ENCODE measurements at regions of chr6 and their contacts with region 1.

Region 1: DNA sequence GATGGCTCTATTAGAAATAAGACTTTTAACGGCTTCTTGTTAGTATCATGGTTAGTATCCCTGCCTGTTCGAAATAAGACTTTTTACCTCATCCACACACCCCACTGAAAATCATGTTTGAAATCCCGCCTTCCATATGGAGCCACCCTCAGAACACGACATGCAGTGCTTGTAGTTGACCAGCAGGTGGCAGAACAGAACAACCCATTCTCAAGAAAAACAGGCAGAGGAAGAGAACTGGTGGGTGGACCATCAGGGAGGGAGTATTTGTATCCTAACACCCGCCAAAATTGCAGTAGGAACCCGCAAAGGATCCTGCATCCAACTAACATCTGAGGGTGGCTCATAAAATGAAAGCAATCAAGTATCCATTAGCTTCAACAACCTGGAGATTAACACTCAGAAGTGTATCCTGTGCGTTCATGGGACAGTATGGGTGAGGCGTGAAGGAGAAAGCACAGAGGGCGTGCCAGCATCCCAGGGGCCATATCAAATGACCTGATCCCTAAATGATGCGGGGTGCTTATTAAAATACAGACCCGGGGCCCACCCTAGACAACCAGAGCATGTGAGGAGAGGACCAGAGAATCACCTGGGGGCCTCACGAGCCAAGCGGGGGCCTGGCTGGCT is 89.6 kb upstream of the NHSL1 start:
- DNase-seq: peak in 1 of 2 donors; percentile 73
- ATAC-seq: peak in 7 of 8 donors; percentile 39 to 68 (median 52)
- H3K4me3 ChIP-seq: no peak overlapping the region
- H3K27ac ChIP-seq: no peak overlapping the region
- H3K4me1 ChIP-seq: peaks cover 0 to 31% (median 8%) of the 10 kb centered on the region in 9 donors
- H3K27me3 ChIP-seq: no peaks in the 10 kb centered on the region
- CTCF ChIP-seq: peak; percentile 75 to 97 (median 92)

Region 2: DNA sequence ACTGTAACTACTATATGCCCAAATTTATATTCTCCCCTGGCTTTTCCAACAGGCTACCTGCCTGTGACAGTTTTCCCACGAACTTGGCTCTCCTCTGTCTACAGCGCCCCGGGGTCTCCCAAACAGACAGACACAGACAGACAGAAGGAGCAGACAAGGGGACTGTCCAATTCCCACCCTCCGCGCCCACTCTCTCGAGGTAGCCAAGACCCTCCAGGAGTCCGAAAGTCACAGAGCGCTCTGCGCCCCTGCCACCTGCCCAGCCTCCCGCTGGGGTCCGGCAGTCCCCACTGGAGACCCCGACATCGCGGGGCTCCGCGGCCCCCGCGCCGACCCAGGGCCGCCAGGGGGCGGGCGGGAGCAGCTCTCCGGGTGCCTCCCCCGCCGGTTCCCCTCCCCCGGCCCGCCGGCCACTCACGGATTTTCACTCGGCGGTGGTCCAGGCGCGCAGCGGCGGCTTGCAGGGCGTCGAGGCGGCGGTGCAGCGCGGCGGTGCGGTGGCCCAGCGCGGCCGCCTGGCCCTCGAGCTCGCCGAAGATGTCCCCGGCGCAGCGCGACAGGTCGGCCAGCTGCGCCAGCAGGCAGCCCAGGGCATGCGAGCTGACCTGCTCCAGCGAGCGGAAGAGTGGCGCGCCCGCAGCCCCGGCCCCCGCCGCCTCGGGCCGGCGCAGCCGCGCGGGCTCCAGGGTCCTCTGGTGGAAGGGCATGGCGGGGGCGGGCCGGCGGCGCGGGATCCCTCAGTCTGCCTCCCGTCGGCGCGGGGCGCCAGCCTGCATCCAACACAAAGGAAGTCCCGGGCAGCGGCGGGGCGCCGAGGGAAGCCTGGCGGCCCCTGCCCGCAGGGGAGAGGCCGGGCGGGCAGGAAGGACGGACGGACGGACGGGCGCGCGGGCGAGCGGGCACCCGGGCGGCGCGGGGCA is 103.4 kb after region 1 on chr6:
- intact Hi-C with region 1: loop called in 5 of 10 experiments (anchors 2 to 5 kb)
- DNase-seq: peak; percentile 73 to 84
- ATAC-seq: peak; percentile 78 to 86 (median 84)
- H3K4me3 ChIP-seq: peak overlapping the region; percentile 48 to 88 (median 72)
- H3K27ac ChIP-seq: peak overlapping the region; percentile 46 to 82 (median 75)
- H3K4me1 ChIP-seq: peaks cover 0 to 14% (median 9%) of the 10 kb centered on the region in 9 donors
- H3K27me3 ChIP-seq: peaks cover 0 to 7% (median 0%) of the 10 kb centered on the region in 7 donors
- CTCF ChIP-seq: peak; percentile 80 to 96 (median 92)

Region 3: DNA sequence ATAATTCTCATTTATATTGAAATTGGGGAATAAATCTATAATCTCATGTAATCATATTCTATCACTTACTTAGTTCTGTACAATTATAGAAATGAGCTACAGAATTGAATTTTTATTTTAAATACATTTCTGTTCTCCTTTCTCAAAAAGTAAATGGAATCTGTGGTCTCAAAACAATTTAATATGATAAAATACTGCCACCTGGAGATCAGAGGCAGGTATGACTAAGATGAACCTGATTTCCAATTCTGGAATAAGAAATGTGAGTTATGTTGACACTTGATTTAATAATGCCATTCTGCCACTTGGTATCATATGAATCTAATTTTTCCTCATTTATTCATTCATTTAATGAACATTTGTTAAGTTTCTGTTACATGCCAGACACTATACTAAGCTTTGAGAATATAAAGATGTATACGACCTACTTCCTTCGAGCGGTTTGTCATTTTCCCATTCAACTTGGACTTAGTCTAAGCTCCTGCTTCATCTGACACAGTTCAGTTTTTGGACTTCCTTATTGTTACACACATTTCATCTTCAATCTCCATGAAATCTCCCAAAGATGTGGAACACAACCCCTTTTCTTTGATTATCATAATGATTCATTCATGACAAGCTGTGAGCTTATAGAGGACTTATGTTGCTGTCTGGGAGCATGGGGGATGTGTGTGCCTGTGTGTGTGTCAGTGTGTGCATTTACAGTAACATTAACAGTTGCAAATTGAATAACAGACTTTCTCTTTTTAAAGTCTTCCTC is 177.2 kb after region 1 on chr6:
- intact Hi-C with region 1: loop called (anchors 1 to 5 kb)
- DNase-seq: no peak
- ATAC-seq: no peak
- H3K4me3 ChIP-seq: no peak overlapping the region
- H3K27ac ChIP-seq: no peak overlapping the region
- H3K4me1 ChIP-seq: no peaks in the 10 kb centered on the region
- H3K27me3 ChIP-seq: no peaks in the 10 kb centered on the region
- CTCF ChIP-seq: peak; percentile 34 to 86 (median 70)

Region 4: DNA sequence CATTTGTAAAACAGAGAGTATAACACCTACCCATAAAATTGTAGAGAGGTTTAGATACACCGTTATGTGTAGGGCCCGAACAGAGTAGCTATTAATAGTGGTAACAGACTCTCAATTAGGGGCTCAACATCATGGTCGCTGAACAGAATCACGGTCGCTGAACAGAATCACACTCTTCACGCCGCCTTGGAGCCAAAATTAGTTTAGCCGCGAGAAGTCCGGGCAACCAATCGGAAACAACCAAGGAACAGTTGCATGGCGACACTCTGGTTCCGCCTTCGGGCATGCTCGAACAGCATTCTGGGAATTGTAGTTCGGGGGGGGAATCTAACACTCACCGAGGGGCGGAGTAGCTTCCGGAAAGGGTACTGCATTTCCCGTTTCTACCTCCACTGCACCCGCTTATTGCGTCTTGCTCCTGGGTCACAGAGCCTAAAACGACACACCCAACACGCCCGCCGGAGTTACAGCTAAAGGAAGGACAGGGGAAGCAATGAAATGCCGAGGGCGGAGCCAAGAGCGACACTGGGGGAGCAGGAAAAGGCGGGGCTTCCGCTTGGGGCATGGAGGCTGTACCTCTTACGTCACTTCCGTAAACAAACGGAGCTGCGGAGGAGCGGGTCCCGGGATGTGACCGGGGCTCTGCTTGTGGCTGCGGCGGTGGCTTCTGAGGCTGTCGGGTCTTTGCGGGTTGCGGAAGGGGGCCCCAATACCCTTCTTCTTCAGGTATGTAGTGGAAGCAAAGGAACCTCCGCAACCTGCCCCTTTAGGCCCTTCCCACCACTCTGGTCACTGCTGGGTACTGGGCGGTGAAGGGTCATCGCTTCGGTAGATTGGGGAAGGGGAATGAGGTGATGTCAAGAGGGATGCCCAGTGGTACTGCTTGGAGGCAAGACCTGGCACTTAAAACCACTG is 184.5 kb after region 1 on chr6 and contains the start of gene CCDC28A:
- intact Hi-C with region 1: loop called in 5 of 10 experiments (anchors 2 to 5 kb)
- DNase-seq: peak; percentile 91 to 96
- ATAC-seq: peak; percentile 97 to 99 (median 98)
- H3K4me3 ChIP-seq: peak within 1 kb of the TSS; percentile 69 to 96 (median 84)
- H3K27ac ChIP-seq: peak within 1 kb of the TSS; percentile 90 to 99 (median 96)
- H3K4me1 ChIP-seq: peaks cover 2 to 30% (median 22%) of the 10 kb centered on the region in 9 donors
- H3K27me3 ChIP-seq: no peaks in the 10 kb centered on the region
- CTCF ChIP-seq: peak in 1 of 9 donors; percentile 9
- total RNA-seq, gene CCDC28A: 4.9 to 15.6 (median 9.5) TPM

Measured in heart right ventricle (tissue), 16 donors.